BJ (cell line): ENCODE measurements at regions of chr1 and their contacts with region 1.

Region 1: GRCh38 chr1:65209005-65209885 is 61.2 kb downstream of the AK4 start:
- DNase-seq: no peak
- H3K4me3 ChIP-seq: no peak overlapping the region
- H3K27me3 ChIP-seq: no peaks in the 10 kb centered on the region
- CTCF ChIP-seq: peak; percentile 67

Region 2: DNA sequence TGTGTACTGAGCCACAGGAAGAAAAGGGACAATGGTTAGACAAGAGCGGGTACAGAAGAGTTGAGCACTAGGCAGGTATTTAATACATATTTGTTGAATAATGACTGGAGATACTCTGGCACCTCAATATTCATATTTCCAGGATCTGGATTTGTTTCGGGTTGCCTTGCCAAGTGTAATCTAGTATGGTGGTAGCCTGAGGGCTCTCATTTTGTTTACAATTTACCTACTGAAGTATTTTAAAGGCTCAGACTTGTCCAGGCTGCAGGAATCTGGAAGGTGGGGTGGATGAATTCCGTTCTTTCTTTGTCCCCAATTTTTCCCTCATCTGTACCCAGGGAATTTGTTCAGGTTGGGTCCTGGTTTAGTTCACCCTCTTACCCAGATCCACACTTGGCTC is 644.4 kb before region 1 on chr1:
- CTCF ChIA-PET with region 1: no interaction called
- POLR2A ChIA-PET with region 1: no interaction called
- DNase-seq: no peak
- H3K4me3 ChIP-seq: no peak overlapping the region
- H3K27me3 ChIP-seq: no peaks in the 10 kb centered on the region
- CTCF ChIP-seq: no peak

Region 3: GRCh38 chr1:65067491-65068201 is 141.6 kb before region 1 on chr1:
- CTCF ChIA-PET with region 1: interaction called, 21 read pairs
- POLR2A ChIA-PET with region 1: no interaction called
- DNase-seq: no peak
- H3K4me3 ChIP-seq: peak overlapping the region; percentile 84
- H3K27me3 ChIP-seq: peaks cover 1% of the 10 kb centered on the region; the same call in 1 of the 2 replicates
- CTCF ChIP-seq: no peak

Region 4: DNA sequence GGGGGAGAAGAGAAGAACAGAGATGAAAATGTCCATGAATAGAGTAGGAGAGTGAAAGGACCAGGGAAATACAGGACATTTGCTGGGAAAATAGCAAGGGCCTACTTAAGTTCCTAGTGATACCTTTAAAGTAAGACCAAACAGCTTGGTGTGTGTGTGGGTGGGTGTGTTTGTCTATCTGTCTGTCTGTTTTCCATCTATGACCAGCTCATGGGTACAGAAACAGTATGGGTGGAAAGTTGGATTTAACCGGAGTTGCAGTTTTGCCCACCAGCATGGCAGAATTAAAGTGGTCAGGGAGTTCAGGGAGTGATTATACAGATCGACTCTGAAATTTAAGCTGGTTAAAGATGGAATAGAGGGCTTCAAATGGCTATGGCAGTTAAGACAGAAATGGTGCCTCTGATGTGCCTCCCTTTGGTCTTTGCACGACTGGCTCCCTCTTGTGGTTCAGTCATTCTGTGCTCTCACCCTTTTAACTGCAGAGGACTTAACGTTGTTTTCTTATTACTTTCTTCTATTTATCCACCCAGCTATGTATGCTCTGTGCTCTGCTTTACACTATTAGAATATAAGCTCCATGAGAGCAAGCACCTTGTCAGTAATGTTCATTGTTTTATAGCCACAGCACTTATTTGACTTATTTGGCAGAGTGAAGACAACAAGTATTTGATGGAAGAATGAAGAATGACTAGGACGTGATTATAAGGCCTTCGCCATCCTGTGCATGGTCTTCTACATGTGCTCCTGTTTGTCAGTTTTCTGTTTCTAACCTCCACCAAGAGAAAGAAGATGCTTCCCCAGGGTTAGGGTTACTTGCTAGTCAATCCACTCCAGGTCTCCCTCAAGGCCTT is 133.9 kb before region 1 on chr1:
- CTCF ChIA-PET with region 1: interaction called, 15 read pairs
- POLR2A ChIA-PET with region 1: no interaction called
- DNase-seq: no peak
- H3K4me3 ChIP-seq: no peak overlapping the region
- H3K27me3 ChIP-seq: peaks cover 8% of the 10 kb centered on the region; the same call in 1 of the 2 replicates
- CTCF ChIP-seq: peak; percentile 81

Region 5: DNA sequence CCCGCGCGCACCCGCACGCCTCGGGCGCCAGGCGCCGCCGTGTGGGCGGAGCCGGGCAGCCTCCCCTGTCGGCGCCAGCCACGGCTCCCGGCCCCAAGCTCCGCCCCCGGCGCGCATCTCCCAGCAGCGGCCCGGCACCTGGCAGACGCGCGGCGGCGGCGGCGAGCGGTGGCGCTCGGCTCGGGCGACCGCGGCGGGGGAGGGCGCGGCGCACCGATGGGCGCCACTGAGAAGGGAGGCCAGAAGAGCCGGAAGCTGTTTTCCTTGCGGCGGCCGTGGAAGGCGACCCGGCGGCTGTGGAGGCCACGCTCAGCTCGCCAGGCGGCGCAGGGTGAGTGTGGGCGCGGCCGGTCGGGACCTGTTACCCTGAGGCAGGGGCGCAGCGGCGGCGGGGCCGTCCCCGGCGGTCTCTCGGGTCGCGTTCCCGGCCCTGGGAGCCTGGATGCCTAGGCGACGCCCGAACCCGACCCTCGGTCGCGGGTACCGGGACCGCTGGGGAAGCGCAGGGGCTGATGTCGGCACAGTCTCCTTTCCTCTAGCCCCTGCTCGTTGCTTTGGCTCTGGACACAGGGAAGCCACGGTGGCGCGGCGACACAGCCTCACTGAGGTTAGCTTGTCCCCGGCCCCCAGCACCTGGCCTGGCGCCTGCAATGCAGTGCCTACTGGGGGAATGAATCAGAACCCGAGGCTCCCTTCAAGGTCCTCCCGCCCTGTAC is 45.2 kb after region 1 on chr1:
- CTCF ChIA-PET with region 1: interaction called, 3 read pairs
- POLR2A ChIA-PET with region 1: interaction called, 10 read pairs
- DNase-seq: no peak
- H3K4me3 ChIP-seq: peak overlapping the region; percentile 75
- H3K27me3 ChIP-seq: no peaks in the 10 kb centered on the region
- CTCF ChIP-seq: peak; percentile 22